Activated CD8-positive, alpha-beta T cell treated with anti-CD3 and anti-CD28 coated beads for 36 hours (primary cell): ENCODE measurements at regions of chr2 and their contacts with region 1.

Region 1: GRCh38 chr2:11234309-11234708 is 79.0 kb downstream of the SLC66A3 start:
- DNase-seq: no peak
- ATAC-seq: no peak
- H3K4me3 Mint-ChIP-seq: no peak overlapping the region
- H3K27ac Mint-ChIP-seq: no peak overlapping the region
- H3K4me1 Mint-ChIP-seq: peaks cover 7% of the 10 kb centered on the region
- H3K27me3 Mint-ChIP-seq: no peaks in the 10 kb centered on the region
- CTCF ChIP-seq: peak; percentile 56

Region 2: GRCh38 chr2:11147263-11147662 is 87.0 kb before region 1 on chr2:
- CTCF ChIA-PET with region 1: no interaction called
- POLR2A ChIA-PET with region 1: no interaction called
- intact Hi-C with region 1: no loop called
- DNase-seq: no peak
- ATAC-seq: no peak
- H3K4me3 Mint-ChIP-seq: no peak overlapping the region
- H3K27ac Mint-ChIP-seq: no peak overlapping the region
- H3K4me1 Mint-ChIP-seq: no peaks in the 10 kb centered on the region
- H3K27me3 Mint-ChIP-seq: no peaks in the 10 kb centered on the region
- CTCF ChIP-seq: no peak

Region 3: DNA sequence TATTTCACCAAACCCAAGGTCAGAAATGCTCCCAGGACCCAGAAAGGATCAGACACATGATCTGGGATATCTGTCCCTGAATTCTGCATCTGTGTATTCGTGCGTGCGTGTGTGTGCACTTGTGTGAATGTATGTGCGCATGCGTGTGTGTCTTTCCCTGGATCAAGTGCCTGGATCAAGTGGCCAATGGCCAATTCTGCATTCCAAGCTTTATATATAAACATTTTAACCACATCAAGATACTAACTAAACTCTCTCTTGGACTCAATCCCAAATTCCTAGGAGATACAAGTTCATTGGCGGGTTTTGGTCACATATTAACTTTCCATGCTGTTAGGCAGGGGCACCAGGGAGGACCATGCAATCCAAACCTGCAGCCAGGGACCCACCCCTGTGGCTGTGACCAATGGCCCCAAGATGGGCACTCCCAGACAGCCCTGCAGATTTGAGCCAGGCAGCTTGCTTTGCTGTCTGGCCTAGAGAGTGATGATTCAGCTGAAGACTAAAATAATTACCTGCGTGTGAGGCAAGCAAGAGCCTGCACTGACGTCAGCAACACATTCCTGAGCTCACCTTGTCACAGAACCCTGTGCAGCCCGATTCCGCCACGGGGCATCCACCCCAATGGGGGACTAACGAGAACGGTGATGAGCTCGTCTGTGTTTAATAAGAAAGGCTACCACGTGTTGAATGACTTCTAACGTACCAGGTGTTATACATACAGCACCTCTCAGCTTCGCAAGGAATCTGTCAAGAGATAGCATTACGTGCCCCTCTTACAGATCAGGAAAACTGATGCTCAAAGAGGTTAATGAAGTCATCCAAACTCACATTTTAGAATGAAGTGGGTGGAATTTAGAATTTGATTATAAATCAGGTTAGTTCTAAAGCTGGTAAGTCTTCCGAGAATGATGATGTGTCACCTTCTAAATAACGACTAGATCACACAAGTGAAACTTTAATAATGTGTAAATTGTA is 155.5 kb after region 1 on chr2:
- CTCF ChIA-PET with region 1: no interaction called
- POLR2A ChIA-PET with region 1: no interaction called
- intact Hi-C with region 1: loop called (anchors 10 kb)
- DNase-seq: no peak
- ATAC-seq: no peak
- H3K4me3 Mint-ChIP-seq: no peak overlapping the region
- H3K27ac Mint-ChIP-seq: no peak overlapping the region
- H3K4me1 Mint-ChIP-seq: no peaks in the 10 kb centered on the region
- H3K27me3 Mint-ChIP-seq: peaks cover 2% of the 10 kb centered on the region
- CTCF ChIP-seq: no peak

Region 4: GRCh38 chr2:11446733-11447248 is 212.5 kb after region 1 on chr2:
- CTCF ChIA-PET with region 1: interaction called, 4 read pairs
- POLR2A ChIA-PET with region 1: no interaction called
- intact Hi-C with region 1: loop called (anchors 10 kb)
- DNase-seq: peak; percentile 63
- ATAC-seq: peak; percentile 66
- H3K4me3 Mint-ChIP-seq: no peak overlapping the region
- H3K27ac Mint-ChIP-seq: no peak overlapping the region
- H3K4me1 Mint-ChIP-seq: no peaks in the 10 kb centered on the region
- H3K27me3 Mint-ChIP-seq: no peaks in the 10 kb centered on the region
- CTCF ChIP-seq: peak; percentile 72